Astrocyte of the cerebellum (primary cell): ENCODE measurements at regions of chr5 and their contacts with region 1.

Region 1: DNA sequence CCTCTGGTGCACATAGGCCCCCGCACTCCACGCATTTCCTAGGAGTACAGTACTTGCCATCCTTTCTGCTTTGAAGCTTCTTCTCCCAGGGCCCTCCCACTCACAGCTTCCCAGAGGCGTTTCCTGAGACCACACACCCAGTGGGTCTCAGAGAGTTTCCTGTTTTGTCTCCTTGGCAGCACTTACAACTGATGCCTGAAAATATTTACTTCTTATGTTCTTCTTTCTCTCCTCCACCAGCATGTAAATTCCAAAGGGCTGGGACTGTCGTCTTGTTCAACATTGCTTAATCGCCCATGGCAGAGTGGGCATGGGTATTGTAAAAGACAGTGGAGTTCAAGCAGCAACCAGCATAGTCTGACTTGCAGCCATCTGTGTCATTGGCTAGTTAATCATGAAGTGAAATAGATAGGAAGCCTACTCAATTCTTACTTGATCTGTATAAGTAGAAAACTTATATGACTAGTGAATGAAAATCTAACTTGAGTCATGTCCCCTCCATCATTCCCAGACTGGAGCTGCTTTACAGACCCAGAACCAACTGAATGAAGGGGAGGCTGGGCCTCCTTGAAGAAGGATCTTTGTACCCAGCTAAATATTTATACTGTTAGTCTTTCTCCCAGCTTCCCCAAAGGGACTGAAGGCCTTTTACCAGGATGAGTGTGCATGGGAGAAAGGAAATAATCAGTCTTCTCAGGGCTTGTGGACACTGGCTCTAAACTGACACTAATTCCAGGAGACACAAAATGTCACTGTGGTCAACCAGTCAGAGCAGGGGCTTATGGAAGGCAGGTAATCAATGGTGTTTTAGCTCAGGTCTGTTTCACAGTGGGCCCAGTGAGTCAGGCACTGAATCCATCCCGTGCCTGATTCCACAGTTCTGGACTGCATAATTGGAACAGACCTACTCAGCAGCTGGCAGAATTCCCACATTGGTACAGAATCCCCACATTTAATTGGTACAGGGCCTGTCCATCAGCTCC is 116.4 kb downstream of the SV2C start:
- DNase-seq: no peak
- H3K4me3 ChIP-seq: no peak overlapping the region
- CTCF ChIP-seq: no peak

Region 2: DNA sequence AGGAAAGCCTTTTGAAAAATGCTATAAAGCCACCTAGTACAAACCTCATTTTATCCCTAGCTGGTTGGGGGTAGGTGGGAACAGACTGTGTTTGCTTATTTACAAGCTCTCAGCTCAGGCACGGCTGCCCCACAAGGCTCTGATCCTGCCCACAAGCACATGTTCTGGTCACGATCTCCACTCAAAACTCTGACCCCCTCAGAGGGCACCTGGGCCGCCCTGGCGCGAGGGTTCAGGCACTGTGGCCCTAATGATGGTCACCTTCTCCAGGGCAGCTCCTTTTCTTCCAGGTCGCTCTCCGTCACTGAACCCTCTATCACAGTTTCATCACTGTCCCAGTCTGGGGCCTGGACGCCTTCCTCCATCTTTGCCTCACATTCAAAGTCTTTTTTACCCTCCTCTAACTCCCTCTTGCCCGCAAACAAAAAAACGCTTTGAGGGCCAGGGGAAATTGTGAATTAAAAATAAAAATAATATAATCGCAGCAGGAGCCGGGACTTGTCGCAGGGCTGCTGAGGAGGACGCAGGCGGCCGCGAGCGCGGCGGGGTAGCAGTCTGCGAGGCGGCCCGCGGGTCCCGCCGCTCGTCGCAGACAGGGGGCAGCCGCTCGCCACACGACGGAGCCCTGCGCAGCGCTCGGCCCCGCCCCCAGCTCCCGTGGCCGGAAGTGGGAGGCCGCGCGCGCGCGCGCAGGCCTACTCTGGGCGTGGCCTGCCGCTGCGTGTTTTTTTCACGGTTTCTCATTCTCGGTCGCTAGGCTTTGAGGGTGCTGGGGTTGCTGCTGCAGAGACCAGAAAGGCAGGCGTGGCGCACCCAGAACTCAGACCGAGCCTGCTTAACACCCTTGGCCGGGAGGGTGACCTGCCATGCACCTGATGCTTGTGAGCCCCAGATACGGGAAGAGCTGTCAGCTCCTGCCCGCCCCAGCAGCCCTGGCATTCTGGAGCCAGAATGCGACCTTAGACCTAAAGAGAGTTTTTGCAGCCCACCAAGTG is 963.0 kb before region 1 on chr5 and contains the start of gene ANKRD31:
- in situ Hi-C with region 1: no loop called
- DNase-seq: peak; percentile 20
- H3K4me3 ChIP-seq: peak within 1 kb of the TSS; percentile 81
- CTCF ChIP-seq: peak; percentile 56

Region 3: GRCh38 chr5:76245590-76245989 is 46.0 kb after region 1 on chr5:
- in situ Hi-C with region 1: no loop called
- DNase-seq: no peak
- H3K4me3 ChIP-seq: no peak overlapping the region
- CTCF ChIP-seq: no peak

Region 4: GRCh38 chr5:76269932-76270610 is 70.4 kb after region 1 on chr5:
- in situ Hi-C with region 1: loop called (anchors 5 kb)
- DNase-seq: no peak
- H3K4me3 ChIP-seq: no peak overlapping the region
- CTCF ChIP-seq: no peak